Right ventricle myocardium inferior (tissue), 1 donor: ENCODE measurements at regions of chr2 and their contacts with region 1.

Region 1: DNA sequence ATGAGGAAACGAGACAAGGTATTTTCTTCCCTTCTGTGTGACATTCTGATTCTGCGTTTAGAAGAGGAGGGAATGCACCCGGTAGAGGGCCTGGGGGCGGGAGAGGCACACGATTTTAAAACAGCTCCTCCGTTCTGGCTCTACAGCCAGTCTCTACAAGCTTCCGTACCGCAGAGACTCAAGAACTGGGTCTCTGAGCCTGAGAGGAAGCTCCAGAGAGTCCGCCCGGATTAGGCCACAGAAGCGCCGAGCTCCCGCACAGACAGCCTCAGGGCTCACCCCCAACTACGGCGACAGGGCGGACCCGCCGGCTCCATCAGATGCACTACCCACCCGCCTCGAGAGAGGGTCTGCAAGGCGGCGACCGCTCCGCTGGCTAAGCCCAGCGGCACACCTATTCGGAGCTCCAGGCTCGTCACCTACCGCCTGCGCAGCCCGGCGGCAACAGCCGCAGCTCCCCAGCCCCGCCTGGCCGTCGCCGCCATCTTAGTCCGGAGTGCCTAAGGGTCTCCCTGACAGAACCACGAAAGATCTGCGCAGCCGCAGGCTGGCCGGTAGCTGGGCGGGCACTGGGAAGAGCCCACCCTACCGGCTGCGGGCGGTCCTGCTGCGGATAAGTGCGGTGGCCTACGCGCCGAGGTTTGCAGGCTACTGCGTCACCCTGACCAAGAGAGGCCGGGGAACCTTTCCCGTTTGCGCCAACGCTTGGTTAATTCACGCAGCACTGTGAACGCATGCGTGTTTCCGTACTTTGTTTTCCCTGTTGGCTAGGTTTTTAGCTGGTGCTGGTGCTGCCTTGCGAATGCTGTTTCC is at the start of gene NFU1:
- DNase-seq: peak; percentile 96
- ATAC-seq: peak; percentile 99
- total RNA-seq, gene NFU1: 122 TPM

Region 2: DNA sequence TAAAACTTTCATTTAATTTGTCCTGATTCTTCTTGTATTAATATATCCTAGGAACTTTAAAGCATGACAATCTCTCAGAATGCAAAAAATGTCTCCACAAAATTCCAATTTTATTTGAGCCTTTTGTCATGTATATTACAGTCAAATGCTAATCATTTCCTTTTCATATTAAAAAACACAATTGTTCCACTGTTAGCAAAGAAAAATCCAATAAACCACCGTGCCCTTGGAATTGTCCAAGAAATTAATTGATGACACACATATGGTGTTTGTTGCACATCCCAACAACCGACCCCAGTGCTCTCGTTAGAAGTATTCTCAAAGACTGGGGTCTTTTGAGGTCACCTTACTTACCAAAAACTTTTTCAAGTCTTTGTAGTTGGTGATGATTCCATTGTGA is 78.2 kb before region 1 on chr2:
- intact Hi-C with region 1: no loop called
- DNase-seq: no peak
- ATAC-seq: no peak

Region 3: GRCh38 chr2:69386789-69387734 is 50.1 kb before region 1 on chr2 and contains the start of gene GFPT1:
- intact Hi-C with region 1: loop called (anchors 5 kb)
- DNase-seq: peak; percentile 97
- ATAC-seq: peak; percentile 99
- total RNA-seq, gene GFPT1: 38.9 TPM